ENCODE measurements at regions of chr4 and their contacts with region 1.

Region 1: DNA sequence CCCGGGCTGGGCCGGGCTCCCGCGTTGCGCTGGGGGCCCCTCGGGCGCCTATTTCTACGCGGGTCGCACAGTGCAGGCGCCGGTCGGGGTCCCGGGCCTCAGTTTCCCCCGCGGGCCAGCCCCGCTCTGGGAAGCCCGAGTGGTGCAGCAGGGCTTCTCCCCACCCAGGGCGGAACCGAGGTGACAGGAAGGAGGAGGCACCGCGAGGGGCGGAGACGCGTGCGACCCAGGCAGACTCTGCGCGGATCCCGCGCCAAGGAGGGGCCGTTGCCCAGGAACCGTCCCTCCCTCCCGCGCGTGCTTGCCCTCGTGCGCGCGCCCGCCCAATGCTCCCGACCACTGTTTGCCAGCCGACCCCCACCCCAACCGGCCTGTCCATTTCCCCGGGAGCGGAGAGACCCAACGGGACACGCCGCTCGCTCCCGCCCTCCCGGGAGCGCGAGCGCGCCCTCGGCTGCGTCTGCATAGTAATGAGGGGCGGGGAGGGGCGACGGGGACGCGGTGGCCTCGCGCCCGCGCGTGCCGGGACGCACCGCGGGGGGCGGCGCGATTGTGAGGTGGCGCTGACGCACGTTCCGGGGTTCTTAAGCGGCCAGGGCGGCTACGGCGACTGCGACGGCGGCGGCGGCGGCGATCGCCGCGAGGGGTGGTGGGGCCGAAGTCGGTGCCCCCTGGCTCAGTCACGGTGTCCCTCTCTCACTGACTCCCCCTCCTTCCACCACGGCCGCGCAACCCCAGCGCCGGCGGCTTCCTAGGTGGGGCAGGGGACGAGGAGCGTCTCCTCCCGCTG is at the start of gene CPEB2:
- DNase-seq: peak; percentile 97
- ATAC-seq: peak; percentile 65
- H3K4me3 ChIP-seq: peak within 1 kb of the TSS; percentile 69
- H3K27ac ChIP-seq: peak within 1 kb of the TSS; percentile 93
- H3K4me1 ChIP-seq: no peaks in the 10 kb centered on the region
- H3K27me3 ChIP-seq: no peaks in the 10 kb centered on the region
- CTCF ChIP-seq: no peak
- POLR2A ChIP-seq: peak; percentile 96
- RAD21 ChIP-seq: no peak
- total RNA-seq, gene CPEB2: 10.6 and 18.1 TPM in 2 replicates

Region 2: DNA sequence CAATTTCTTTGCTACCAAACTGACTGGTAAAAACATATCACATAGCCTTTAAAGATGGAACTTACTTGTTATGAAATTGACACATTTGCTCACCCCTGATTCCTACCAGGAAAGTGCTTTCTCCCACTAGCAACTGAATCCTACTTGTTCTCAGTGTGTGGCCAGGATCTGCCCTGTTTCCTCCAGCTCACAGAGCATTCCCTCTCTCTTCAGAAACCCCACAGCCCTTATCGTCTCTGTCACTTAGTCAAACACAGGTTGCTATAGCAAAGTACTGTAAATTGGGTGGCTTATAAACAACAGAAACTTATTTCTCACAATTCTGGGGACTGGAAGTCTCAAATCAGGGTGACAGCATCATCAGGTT is 1109.3 kb before region 1 on chr4:
- CTCF ChIA-PET with region 1: no interaction called
- POLR2A ChIA-PET with region 1: no interaction called
- dilution Hi-C with region 1: no loop called
- in situ Hi-C with region 1: loop called (anchors 10 kb)
- intact Hi-C with region 1: loop called (anchors 5 kb)
- DNase-seq: peak; percentile 65
- ATAC-seq: peak; percentile 42
- H3K4me3 ChIP-seq: no peak overlapping the region; the same call in 1 of the 2 replicates
- H3K27ac ChIP-seq: peak overlapping the region; percentile 96
- H3K4me1 ChIP-seq: peaks cover 28% of the 10 kb centered on the region
- H3K27me3 ChIP-seq: no peaks in the 10 kb centered on the region
- CTCF ChIP-seq: no peak
- POLR2A ChIP-seq: 0 out of 2 replicates have a peak, but pooled peaks have one; percentile 19
- RAD21 ChIP-seq: no peak

Region 3: DNA sequence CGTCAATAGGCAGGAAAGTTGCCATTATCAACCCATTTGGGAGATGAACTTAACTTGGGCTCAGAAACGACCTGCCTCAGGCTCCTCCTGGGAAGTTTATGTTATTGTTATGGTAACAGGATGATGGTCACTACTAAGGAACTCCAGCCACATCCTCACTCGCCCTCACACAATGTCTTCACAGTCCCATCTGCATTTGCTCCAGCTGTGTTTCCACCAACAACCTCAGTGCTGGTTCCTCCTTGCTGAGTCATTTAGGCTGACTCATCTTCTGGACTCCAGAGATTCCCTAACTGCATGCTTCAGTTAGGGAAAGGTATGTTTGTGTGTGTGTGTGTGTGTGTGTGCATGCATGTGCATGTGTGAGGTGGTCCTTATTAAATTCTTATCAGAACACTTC is 1081.2 kb before region 1 on chr4:
- CTCF ChIA-PET with region 1: no interaction called
- POLR2A ChIA-PET with region 1: no interaction called
- dilution Hi-C with region 1: no loop called
- in situ Hi-C with region 1: loop called (anchors 10 kb)
- intact Hi-C with region 1: loop called (anchors 2 kb)
- DNase-seq: peak; percentile 100
- ATAC-seq: peak; percentile 68
- H3K4me3 ChIP-seq: no peak overlapping the region
- H3K27ac ChIP-seq: peak overlapping the region; percentile 73; the same call in 1 of the 2 replicates
- H3K4me1 ChIP-seq: peaks cover 24% of the 10 kb centered on the region
- H3K27me3 ChIP-seq: no peaks in the 10 kb centered on the region
- CTCF ChIP-seq: no peak
- POLR2A ChIP-seq: no peak; the same call in 1 of the 2 replicates
- RAD21 ChIP-seq: peak; percentile 48

Region 4: GRCh38 chr4:14596904-14597303 is 405.2 kb before region 1 on chr4:
- CTCF ChIA-PET with region 1: no interaction called
- POLR2A ChIA-PET with region 1: no interaction called
- dilution Hi-C with region 1: no loop called
- in situ Hi-C with region 1: no loop called
- intact Hi-C with region 1: no loop called
- DNase-seq: no peak
- ATAC-seq: no peak
- H3K4me3 ChIP-seq: no peak overlapping the region
- H3K27ac ChIP-seq: no peak overlapping the region
- H3K4me1 ChIP-seq: no peaks in the 10 kb centered on the region
- H3K27me3 ChIP-seq: no peaks in the 10 kb centered on the region
- CTCF ChIP-seq: no peak
- POLR2A ChIP-seq: no peak
- RAD21 ChIP-seq: no peak

Region 5: GRCh38 chr4:14856076-14856933 is 145.8 kb before region 1 on chr4:
- CTCF ChIA-PET with region 1: no interaction called
- POLR2A ChIA-PET with region 1: no interaction called
- dilution Hi-C with region 1: no loop called
- in situ Hi-C with region 1: no loop called
- intact Hi-C with region 1: loop called (anchors 1 kb)
- DNase-seq: peak; percentile 100
- ATAC-seq: peak; percentile 97
- H3K4me3 ChIP-seq: no peak overlapping the region
- H3K27ac ChIP-seq: peak overlapping the region; percentile 53
- H3K4me1 ChIP-seq: peaks cover 5% of the 10 kb centered on the region
- H3K27me3 ChIP-seq: no peaks in the 10 kb centered on the region; the same call in 1 of the 2 replicates
- CTCF ChIP-seq: no peak
- POLR2A ChIP-seq: no peak
- RAD21 ChIP-seq: no peak

Region 6: GRCh38 chr4:14943749-14944148 is 58.3 kb before region 1 on chr4:
- CTCF ChIA-PET with region 1: no interaction called
- POLR2A ChIA-PET with region 1: no interaction called
- dilution Hi-C with region 1: no loop called
- in situ Hi-C with region 1: no loop called
- intact Hi-C with region 1: no loop called
- DNase-seq: no peak
- ATAC-seq: no peak
- H3K4me3 ChIP-seq: no peak overlapping the region
- H3K27ac ChIP-seq: no peak overlapping the region
- H3K4me1 ChIP-seq: no peaks in the 10 kb centered on the region
- H3K27me3 ChIP-seq: no peaks in the 10 kb centered on the region
- CTCF ChIP-seq: no peak
- POLR2A ChIP-seq: no peak
- RAD21 ChIP-seq: no peak

Region 7: GRCh38 chr4:14958436-14958835 is 43.6 kb before region 1 on chr4:
- CTCF ChIA-PET with region 1: no interaction called
- POLR2A ChIA-PET with region 1: no interaction called
- dilution Hi-C with region 1: no loop called
- in situ Hi-C with region 1: no loop called
- intact Hi-C with region 1: no loop called
- DNase-seq: no peak
- ATAC-seq: no peak
- H3K4me3 ChIP-seq: no peak overlapping the region
- H3K27ac ChIP-seq: no peak overlapping the region
- H3K4me1 ChIP-seq: no peaks in the 10 kb centered on the region
- H3K27me3 ChIP-seq: no peaks in the 10 kb centered on the region
- CTCF ChIP-seq: no peak
- POLR2A ChIP-seq: no peak
- RAD21 ChIP-seq: no peak

Region 8: GRCh38 chr4:15018361-15018760 is 16.3 kb after region 1 on chr4:
- CTCF ChIA-PET with region 1: no interaction called
- POLR2A ChIA-PET with region 1: interaction called, 14 read pairs
- dilution Hi-C with region 1: no loop called
- in situ Hi-C with region 1: no loop called
- intact Hi-C with region 1: no loop called
- DNase-seq: no peak
- ATAC-seq: no peak
- H3K4me3 ChIP-seq: no peak overlapping the region
- H3K27ac ChIP-seq: no peak overlapping the region
- H3K4me1 ChIP-seq: peaks cover 2% of the 10 kb centered on the region
- H3K27me3 ChIP-seq: no peaks in the 10 kb centered on the region
- CTCF ChIP-seq: no peak
- POLR2A ChIP-seq: no peak
- RAD21 ChIP-seq: no peak

Region 9: GRCh38 chr4:15231265-15232091 is 229.4 kb after region 1 on chr4:
- CTCF ChIA-PET with region 1: no interaction called
- POLR2A ChIA-PET with region 1: no interaction called
- dilution Hi-C with region 1: no loop called
- in situ Hi-C with region 1: no loop called
- intact Hi-C with region 1: loop called (anchors 5 kb)
- DNase-seq: peak; percentile 88
- ATAC-seq: peak; percentile 78
- H3K4me3 ChIP-seq: no peak overlapping the region
- H3K27ac ChIP-seq: peak overlapping the region; percentile 31; the same call in 1 of the 2 replicates
- H3K4me1 ChIP-seq: peaks cover 27% of the 10 kb centered on the region
- H3K27me3 ChIP-seq: peaks cover 3% of the 10 kb centered on the region; the same call in 1 of the 2 replicates
- CTCF ChIP-seq: peak; percentile 88
- POLR2A ChIP-seq: no peak
- RAD21 ChIP-seq: peak; percentile 83

Region 10: GRCh38 chr4:16056681-16057385 is 1054.8 kb after region 1 on chr4:
- CTCF ChIA-PET with region 1: no interaction called
- POLR2A ChIA-PET with region 1: no interaction called
- dilution Hi-C with region 1: no loop called
- in situ Hi-C with region 1: no loop called
- intact Hi-C with region 1: no loop called
- DNase-seq: no peak
- ATAC-seq: no peak
- H3K4me3 ChIP-seq: no peak overlapping the region
- H3K27ac ChIP-seq: no peak overlapping the region
- H3K4me1 ChIP-seq: no peaks in the 10 kb centered on the region
- H3K27me3 ChIP-seq: peaks cover 31% of the 10 kb centered on the region
- CTCF ChIP-seq: no peak
- POLR2A ChIP-seq: no peak
- RAD21 ChIP-seq: no peak

Measured in IMR-90 (cell line).